Pancreas (tissue), 10 donors: ENCODE measurements at regions of chr20 and their contacts with region 1.

Region 1: GRCh38 chr20:40868551-40869217 is 159.9 kb upstream of the TOP1 start:
- DNase-seq: peak in 1 of 6 donors; percentile 3
- ATAC-seq: peak in 3 of 4 donors; percentile 41 to 58 (median 44)
- H3K4me3 ChIP-seq: no peak overlapping the region
- H3K27ac ChIP-seq: no peak overlapping the region
- H3K4me1 ChIP-seq: no peaks in the 10 kb centered on the region
- H3K27me3 ChIP-seq: no peaks in the 10 kb centered on the region
- CTCF ChIP-seq: no peak

Region 2: DNA sequence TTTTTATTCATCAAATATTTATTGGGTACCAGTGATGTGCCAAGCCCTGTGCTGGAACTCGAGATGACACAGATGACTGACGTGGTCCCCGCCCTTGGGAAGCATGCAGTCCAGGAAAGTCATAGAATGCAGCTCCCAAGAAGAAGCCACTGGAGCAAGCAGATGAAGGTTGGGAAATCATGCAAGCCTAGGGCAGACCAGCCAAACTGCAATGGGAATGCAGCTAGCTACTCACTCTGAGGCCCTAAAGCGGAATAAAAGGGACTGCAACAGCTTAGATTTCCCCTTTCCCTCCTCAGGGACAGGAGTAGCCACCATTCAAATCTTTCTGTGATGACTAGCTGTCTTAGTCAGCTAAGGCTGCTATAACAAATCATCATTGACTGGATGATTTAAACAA is 331.9 kb before region 1 on chr20:
- intact Hi-C with region 1: no loop called
- DNase-seq: no peak
- ATAC-seq: no peak
- H3K4me3 ChIP-seq: no peak overlapping the region
- H3K27ac ChIP-seq: no peak overlapping the region
- H3K4me1 ChIP-seq: no peaks in the 10 kb centered on the region
- H3K27me3 ChIP-seq: no peaks in the 10 kb centered on the region
- CTCF ChIP-seq: no peak

Region 3: GRCh38 chr20:40806929-40807820 is 61.5 kb before region 1 on chr20:
- intact Hi-C with region 1: loop called in 1 of 3 experiments (anchors 10 kb)
- DNase-seq: no peak
- ATAC-seq: peak in 1 of 4 donors; percentile 31
- H3K4me3 ChIP-seq: no peak overlapping the region
- H3K27ac ChIP-seq: no peak overlapping the region
- H3K4me1 ChIP-seq: no peaks in the 10 kb centered on the region
- H3K27me3 ChIP-seq: no peaks in the 10 kb centered on the region
- CTCF ChIP-seq: no peak